Psoas muscle (tissue), 8 donors: ENCODE measurements at regions of chr17 and their contacts with region 1.

Region 1: DNA sequence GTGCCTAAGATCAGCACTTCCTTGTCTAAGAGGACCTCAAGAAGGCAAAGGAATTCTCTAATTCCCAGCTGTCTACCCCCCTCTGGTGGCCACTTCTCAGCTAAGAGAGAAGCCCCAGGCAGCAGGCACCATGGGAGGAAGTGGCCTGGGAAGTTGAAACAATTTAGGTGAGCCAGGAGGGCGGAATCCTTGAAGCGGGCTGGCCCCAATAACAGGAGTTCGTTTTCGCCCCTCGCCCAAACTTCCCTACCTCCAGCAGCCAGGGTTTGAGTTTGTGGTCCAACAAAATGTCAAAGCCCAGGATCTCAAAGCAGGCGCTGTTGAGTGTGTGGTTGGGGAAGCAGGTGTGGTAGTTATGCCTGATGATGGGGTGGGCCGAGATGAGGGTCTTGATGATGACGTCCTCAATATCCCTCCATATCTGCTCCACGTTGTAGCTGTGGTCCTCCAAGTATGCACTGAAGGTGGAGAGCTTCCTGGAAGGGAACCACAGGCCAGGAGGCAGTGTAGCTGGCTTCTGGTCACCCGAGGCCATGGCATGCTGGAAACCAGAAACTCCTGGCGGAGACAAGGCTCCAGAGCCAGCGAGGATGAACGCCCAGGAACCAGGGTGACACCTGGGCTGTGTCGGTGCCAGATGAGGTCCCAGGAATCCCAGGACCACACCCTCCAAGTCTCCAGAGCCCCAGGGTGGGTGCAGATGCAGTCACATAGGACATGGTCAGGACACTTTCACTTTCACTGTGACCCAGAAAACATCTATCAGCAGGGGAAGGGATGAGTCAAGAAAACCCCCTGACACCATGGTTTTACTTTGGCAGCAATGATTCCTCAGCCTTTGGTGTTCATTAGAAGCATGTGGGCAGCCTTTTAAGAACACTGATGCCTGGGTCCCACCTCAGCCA is 25.6 kb downstream of the TTLL6 start:
- DNase-seq: peak; percentile 43 to 62
- ATAC-seq: peak; percentile 51 to 72 (median 66)
- H3K4me3 ChIP-seq: no peak overlapping the region
- H3K27ac ChIP-seq: no peak overlapping the region
- H3K4me1 ChIP-seq: no peaks in the 10 kb centered on the region
- H3K27me3 ChIP-seq: peaks cover 0 to 60% (median 4%) of the 10 kb centered on the region in 3 donors
- CTCF ChIP-seq: peak; percentile 64

Region 2: DNA sequence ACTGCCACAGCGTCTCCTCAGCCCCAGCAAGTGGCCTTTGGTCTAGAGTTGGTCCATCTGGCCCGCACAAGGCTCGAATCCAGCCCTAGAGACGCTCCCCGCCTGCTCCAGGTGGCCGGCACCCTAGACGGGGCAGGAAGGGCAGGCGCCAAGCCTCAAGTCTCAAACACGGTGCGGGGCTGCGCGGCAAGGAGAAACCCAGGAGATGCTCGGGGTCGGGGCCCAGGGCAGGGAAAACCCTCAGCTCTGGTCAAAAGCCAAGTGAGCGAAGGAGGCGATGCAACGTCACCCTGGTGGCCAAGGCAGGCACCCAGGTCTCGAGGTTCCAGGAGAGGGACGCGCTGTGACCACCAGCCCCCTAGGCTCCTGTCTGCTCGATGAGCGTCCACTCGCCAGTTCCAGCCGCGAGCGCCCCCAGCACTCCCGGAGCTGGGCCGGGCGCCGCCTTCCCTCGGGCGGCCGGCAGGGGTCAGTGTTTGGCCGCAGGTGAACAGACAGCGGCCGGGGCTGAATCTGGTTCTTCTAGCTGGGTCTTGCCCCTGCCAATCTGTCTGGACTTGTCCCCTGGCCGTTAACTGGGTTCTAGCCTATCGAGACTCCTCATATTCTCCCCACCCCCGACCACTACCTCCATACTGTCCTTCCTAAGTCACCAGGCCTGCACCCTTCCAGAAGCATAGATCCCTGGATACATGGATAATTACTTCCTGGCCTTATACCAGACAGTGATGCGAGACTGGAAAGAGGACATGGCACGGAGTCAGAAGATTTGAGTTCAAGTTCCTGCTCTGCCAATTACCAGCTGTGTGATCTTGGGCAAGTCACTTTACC is 113.0 kb before region 1 on chr17:
- intact Hi-C with region 1: loop called (anchors 2 to 5 kb)
- DNase-seq: peak; percentile 58 to 76
- ATAC-seq: peak; percentile 79 to 93 (median 83)
- H3K4me3 ChIP-seq: no peak overlapping the region
- H3K27ac ChIP-seq: no peak overlapping the region
- H3K4me1 ChIP-seq: no peaks in the 10 kb centered on the region
- H3K27me3 ChIP-seq: peaks cover 0 to 44% (median 5%) of the 10 kb centered on the region in 3 donors
- CTCF ChIP-seq: peak; percentile 88

Region 3: DNA sequence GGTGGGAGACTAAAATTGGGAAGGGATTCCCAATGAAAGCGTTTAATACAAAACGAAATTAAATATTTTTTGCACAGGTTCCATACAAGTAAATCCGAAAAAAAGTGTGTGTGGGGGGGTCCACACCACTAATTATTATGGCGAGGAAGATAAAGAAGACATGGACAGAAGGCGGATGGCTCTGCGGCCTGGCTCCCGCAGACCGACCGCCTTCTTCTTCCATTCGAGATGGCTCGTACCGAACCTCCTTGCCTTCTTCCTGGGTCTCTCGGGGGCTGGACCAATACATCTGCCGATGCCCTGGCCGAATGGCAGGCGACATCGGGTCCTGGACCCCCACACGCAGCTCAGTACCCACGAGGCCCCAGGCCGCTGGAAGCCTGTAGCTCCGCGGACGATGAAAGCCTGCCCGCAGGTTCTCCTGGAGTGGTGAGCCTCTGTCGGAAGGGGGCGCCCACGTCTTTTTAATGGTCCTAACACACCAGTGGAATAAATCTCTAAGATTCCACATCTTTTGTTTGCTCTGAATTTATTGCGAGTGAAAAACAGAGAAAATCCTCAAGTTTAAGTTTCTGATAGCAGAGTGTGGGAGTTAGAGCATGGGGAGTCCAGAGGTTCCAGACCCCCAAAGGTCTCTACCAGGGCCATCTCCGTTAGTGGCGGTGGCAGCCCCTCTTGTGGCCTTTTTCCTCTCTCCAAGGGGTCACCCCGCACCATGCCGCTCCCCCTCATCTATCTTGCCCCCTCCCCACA is 67.0 kb before region 1 on chr17:
- intact Hi-C with region 1: loop called (anchors 5 kb)
- DNase-seq: peak; percentile 82 to 90
- ATAC-seq: peak; percentile 69 to 85 (median 71)
- H3K4me3 ChIP-seq: no peak overlapping the region
- H3K27ac ChIP-seq: no peak overlapping the region
- H3K4me1 ChIP-seq: peaks cover 13% of the 10 kb centered on the region
- H3K27me3 ChIP-seq: peaks cover 9 to 99% (median 60%) of the 10 kb centered on the region in 3 donors
- CTCF ChIP-seq: peak; percentile 64